CD4-positive, alpha-beta memory T cell (primary cell): ENCODE measurements at regions of chr17 and their contacts with region 1.

Region 1: GRCh38 chr17:49390548-49391324 is 23.9 kb downstream of the PHB1 start:
- DNase-seq: peak in 1 of 5 donors; percentile 29
- H3K4me3 ChIP-seq: no peak overlapping the region
- H3K4me3 Mint-ChIP-seq: peak overlapping the region in 7 of 8 donors; percentile 63 to 89 (median 85)
- H3K27ac ChIP-seq: peak overlapping the region; percentile 25
- H3K27ac Mint-ChIP-seq: peak overlapping the region; percentile 76 to 98 (median 85)
- H3K4me1 ChIP-seq: peaks cover 63% of the 10 kb centered on the region
- H3K4me1 Mint-ChIP-seq: peaks cover 46 to 74% (median 60%) of the 10 kb centered on the region in 4 donors
- H3K27me3 ChIP-seq: no peaks in the 10 kb centered on the region
- H3K27me3 Mint-ChIP-seq: no peaks in the 10 kb centered on the region

Region 2: DNA sequence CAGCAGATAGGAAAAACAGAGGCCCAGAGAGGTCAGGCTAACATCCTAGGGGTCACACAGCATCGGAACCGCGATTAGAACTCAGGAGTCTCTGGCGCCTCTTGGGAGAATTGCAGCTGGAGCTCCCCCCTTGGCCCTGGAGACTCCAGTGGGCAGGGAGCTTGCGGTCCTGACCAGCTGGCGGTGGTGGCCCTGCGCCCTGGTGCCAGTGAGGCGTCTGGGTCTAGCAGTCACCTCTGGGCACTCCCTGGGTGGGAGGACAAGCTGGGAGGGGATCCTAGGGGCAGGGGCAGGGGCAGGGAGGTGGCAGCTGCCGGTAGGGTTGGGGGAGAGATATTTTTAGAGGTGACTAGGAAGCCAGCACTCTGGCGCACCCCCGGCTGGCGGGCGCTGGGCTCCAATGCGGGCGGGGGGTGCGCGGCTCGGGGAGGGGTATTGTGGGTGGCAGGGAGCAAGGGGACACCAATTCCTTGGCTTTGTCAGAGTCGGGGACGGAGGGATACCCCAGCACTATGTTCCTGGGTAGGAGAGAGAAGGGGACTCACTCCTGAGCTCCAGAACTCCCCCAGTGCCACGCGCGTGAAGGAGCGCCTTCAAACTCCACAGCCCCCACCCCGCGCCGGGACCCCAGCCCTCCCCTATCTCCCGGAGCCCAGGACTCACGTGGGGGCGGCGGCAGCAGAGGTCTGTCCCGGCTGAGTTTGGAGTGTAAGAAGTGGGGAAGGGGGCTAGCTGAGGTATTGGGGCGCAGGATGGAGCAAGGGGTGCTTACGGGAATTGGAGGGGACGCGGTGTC is 160.7 kb before region 1 on chr17:
- CTCF ChIA-PET with region 1: no interaction called
- POLR2A ChIA-PET with region 1: no interaction called
- intact Hi-C with region 1: no loop called
- DNase-seq: no peak
- H3K4me3 ChIP-seq: peak overlapping the region; percentile 62 to 88
- H3K4me3 Mint-ChIP-seq: peak overlapping the region; percentile 64 to 95 (median 83)
- H3K27ac ChIP-seq: no peak overlapping the region
- H3K27ac Mint-ChIP-seq: peak overlapping the region in 6 of 7 donors; percentile 8 to 74 (median 67)
- H3K4me1 ChIP-seq: peaks cover 22% of the 10 kb centered on the region
- H3K4me1 Mint-ChIP-seq: peaks cover 8 to 24% (median 13%) of the 10 kb centered on the region in 4 donors
- H3K27me3 ChIP-seq: peaks cover 16% of the 10 kb centered on the region
- H3K27me3 Mint-ChIP-seq: peaks cover 7 to 12% of the 10 kb centered on the region in 2 donors

Region 3: DNA sequence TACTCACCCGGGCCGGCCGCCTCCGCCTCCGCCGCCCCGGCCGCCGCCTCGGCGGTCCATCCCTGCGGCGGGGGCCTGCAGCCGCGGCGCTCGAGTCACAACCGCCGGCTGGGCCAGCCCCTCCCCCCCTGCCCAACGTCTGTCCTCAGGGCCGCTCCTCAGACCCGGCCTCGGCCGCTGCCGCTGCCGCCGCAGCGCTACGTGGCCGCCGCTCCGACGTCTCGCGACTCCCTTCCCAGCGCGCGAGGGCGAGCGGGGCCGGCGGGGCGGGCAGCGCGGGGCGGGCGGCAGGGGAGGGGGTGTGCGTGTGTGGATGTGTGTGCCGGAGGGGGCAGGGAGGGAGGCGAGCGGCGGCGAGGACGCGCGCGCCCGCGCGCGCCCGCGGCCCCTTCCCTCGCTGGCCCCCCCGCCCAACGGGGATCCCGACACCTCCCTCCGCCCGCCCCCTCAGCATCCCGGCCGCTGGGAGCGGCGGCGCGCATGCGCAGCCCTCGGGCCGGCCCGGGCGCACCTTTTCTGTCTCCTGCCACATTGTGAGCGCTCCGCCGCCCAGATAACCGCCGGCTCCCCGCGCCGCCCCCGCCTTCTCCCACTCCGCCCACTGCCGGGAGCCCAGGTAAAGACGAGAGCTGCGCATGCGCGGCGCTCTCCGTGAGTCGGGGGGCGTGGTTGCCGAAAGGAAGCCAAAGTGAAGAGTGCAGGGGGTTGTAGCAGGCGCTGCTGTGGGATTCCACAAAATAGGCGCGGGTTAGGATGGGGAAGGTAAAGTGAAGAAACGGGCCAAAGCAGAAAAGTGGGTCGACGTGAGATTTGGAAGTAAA is 28.6 kb before region 1 on chr17 and contains the start of gene ZNF652:
- CTCF ChIA-PET with region 1: interaction called, 199 read pairs
- POLR2A ChIA-PET with region 1: interaction called, 95 read pairs
- intact Hi-C with region 1: loop called (anchors 2 kb)
- DNase-seq: peak; percentile 96 to 98 (median 97)
- H3K4me3 ChIP-seq: peak within 1 kb of the TSS; percentile 48 to 61
- H3K4me3 Mint-ChIP-seq: peak within 1 kb of the TSS; percentile 91 to 98 (median 94)
- H3K27ac ChIP-seq: peak within 1 kb of the TSS; percentile 66
- H3K27ac Mint-ChIP-seq: peak within 1 kb of the TSS; percentile 91 to 98 (median 96)
- H3K4me1 ChIP-seq: peaks cover 62% of the 10 kb centered on the region
- H3K4me1 Mint-ChIP-seq: peaks cover 43 to 64% (median 57%) of the 10 kb centered on the region in 4 donors
- H3K27me3 ChIP-seq: no peaks in the 10 kb centered on the region
- H3K27me3 Mint-ChIP-seq: no peaks in the 10 kb centered on the region
- total RNA-seq, gene ZNF652: 64.2 to 68.6 TPM

Region 4: GRCh38 chr17:49597928-49598655 is 207.4 kb after region 1 on chr17:
- CTCF ChIA-PET with region 1: no interaction called
- POLR2A ChIA-PET with region 1: no interaction called
- intact Hi-C with region 1: no loop called
- DNase-seq: no peak
- H3K4me3 ChIP-seq: no peak overlapping the region
- H3K4me3 Mint-ChIP-seq: no peak overlapping the region
- H3K27ac ChIP-seq: no peak overlapping the region
- H3K27ac Mint-ChIP-seq: peak overlapping the region in 1 of 7 donors; percentile 63
- H3K4me1 ChIP-seq: no peaks in the 10 kb centered on the region
- H3K4me1 Mint-ChIP-seq: peaks cover 0 to 11% (median 3%) of the 10 kb centered on the region in 4 donors
- H3K27me3 ChIP-seq: no peaks in the 10 kb centered on the region
- H3K27me3 Mint-ChIP-seq: no peaks in the 10 kb centered on the region